ENCODE measurements at regions of chr16 and their contacts with region 1.

Region 1: DNA sequence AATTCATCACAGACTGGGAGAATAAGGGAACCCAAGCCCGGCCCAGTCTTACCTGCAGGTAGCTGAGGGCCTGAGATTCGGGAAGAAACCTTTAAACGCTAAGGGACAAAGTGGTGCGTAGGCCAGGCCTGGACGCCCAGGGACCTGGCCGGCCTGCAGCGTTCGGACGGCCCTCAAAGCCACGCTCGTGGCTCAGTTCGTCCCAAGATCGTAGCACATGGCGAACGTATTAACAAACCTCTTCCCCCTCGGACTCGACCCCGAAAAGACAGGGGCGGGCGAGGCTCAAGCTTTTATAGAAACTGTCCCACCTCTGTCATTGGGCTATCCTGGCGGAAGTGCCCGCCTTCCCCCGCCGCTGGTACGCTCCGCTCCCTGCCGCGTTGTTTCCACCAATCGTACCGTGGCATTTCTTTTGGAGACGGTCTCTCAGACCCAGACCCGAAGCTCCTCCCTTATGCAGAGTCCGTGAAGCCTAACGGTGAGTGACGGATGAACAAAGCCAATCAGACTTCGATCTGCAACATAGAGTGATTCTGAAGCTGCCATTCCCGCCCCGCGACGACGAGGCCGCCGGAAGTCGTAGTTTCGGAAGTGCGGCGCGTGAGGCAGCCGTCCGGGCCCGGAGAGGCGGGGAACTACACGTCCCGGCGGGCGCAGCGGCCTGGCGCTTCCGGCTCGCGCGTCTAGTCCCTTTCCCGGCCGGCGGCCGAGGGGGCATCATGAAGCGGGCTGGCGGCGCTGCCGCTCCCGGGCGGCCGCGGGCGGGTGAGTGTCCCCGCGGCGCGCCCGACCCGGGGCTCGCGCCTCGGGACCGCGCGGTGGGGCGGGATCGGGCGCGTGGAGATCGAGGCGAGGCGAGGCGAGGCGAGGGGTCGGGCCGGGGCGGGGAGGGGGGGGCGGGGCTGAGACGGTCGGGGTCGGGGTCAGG is at the start of gene TRAF7:
- DNase-seq: peak; percentile 100

Region 2: GRCh38 chr16:2223375-2224182 is 68.2 kb after region 1 on chr16 and contains the start of gene E4F1:
- in situ Hi-C with region 1: no loop called
- DNase-seq: peak; percentile 100

Region 3: GRCh38 chr16:2459647-2460390 is 304.5 kb after region 1 on chr16 and contains the start of gene TEDC2:
- in situ Hi-C with region 1: loop called (anchors 25 kb)
- DNase-seq: peak; percentile 98

Measured in ACHN (cell line).